A549 (cell line): ENCODE measurements at regions of chr19 and their contacts with region 1.

Region 1: GRCh38 chr19:46487802-46488445 is 7.7 kb downstream of the PNMA8B start:
- DNase-seq: peak; percentile 71 to 86
- ATAC-seq: peak; percentile 75 to 93
- H3K4me3 ChIP-seq: peak overlapping the region; percentile 46
- H3K27ac ChIP-seq: peak overlapping the region; percentile 65 to 72; a peak in 5 of 6 replicates
- H3K4me1 ChIP-seq: peaks cover 10% of the 10 kb centered on the region; the same call in 1 of the 3 replicates
- CTCF ChIP-seq: peak; percentile 98
- EP300 ChIP-seq: no peak
- POLR2A ChIP-seq: no peak
- RAD21 ChIP-seq: peak; percentile 99 to 100

Region 2: DNA sequence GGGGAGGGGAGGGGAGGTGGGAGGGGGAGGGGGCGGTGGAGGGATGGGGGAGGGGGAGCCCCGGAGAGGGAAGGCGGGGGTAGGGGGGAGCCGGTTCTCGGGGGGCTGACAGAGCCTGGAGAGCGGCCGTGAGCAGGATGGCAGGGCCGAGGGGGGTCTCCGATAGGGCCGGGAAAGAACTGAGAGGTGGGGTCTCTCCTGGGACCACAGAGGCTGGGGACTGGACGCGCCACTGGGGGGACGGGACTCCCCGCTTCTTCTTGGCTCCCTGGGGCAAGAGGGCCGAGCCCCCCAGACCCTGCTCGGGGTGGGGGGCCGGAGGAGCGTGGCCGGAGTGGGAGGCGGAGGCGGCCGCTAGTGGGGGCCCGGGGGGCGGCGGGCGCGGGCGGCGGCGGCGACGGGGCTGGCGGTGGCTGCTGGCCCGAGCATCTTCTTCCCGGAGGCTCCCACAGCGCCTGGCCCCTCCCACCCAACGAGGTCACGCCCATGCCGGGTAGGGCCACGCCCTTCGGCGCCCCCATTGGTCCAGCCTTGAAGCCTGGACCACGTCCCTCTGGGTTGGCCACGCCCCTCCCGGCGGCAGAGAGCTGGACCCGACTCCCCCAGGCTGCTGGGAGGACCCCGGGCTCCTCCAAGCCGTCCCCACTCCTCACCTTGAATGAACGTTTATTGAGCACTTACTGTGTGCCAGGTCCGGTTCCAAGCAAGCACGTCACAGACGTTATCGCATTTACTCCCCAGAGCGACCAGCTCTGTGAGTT is 514.2 kb before region 1 on chr19 and contains the start of gene NOVA2:
- CTCF ChIA-PET with region 1: no interaction called
- POLR2A ChIA-PET with region 1: no interaction called
- DNase-seq: peak; percentile 88 to 97
- ATAC-seq: peak; percentile 70 to 92
- H3K4me3 ChIP-seq: peak within 1 kb of the TSS; percentile 55
- H3K27ac ChIP-seq: peak within 1 kb of the TSS; percentile 41 to 71; a peak in 4 of 6 replicates
- H3K4me1 ChIP-seq: peaks cover 17% of the 10 kb centered on the region; the same call in 2 of the 3 replicates
- CTCF ChIP-seq: no peak
- EP300 ChIP-seq: no peak
- POLR2A ChIP-seq: no peak
- RAD21 ChIP-seq: no peak
- polyA plus RNA-seq, gene NOVA2: 0.06 and 0.17 TPM in 2 replicates

Region 3: DNA sequence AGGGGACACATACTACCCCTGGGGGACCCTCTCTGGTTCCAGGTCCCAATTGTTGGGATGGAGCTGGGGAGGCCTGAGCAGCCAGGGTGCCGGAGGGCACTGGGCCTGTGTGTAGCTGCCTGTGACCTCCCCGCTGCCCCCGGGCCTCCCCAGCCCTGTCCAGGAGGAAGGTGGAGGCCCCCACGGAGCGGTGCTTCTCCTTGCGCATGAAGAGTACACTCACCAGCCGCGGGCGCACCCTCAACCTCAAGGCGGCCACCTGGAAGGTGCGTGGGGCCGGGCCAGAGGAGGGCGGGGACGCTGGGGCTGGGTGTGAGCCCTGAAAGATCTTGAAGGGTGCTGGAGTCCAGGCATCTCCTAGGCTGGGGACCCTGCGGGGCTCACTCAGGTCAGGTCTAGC is 179.4 kb before region 1 on chr19:
- CTCF ChIA-PET with region 1: no interaction called
- POLR2A ChIA-PET with region 1: no interaction called
- DNase-seq: no peak
- ATAC-seq: 0 out of 6 replicates have a peak, but pooled peaks of 1 of the 2 experiments have one; percentile 14
- H3K4me3 ChIP-seq: no peak overlapping the region
- H3K27ac ChIP-seq: no peak overlapping the region
- H3K4me1 ChIP-seq: peaks cover 3% of the 10 kb centered on the region
- CTCF ChIP-seq: no peak
- EP300 ChIP-seq: no peak
- POLR2A ChIP-seq: no peak
- RAD21 ChIP-seq: no peak

Region 4: DNA sequence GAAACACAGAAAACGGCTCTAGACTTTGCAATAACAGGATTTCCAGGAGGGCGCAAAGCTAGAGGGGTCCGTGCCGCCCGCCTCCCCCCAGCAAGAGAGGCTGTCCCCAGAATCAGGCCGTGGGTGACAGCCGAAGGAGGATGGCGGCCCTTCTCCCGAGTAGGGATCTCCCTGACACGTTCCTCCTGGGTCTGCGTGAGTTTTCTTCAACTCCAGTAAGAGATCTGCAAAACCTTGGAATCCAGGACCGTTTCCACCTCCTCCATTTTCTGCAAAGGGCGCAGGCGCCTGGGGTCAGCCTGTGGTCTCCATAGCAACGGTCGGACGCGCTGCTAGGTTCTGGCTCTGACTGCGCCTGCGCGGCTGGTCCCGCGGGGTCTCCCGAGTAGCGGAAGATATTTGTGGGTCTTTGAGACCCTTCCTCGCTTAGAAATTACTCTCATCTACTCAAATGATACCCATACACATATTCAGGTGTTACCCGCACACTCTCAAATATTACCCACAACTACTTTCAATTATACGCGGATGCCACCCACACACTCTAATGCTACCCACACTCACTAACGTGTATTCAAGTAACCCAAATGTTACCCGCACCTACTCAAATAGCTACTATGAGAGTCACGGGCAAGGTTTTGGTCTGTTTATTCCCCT is 61.3 kb before region 1 on chr19:
- CTCF ChIA-PET with region 1: interaction called, 15 read pairs
- POLR2A ChIA-PET with region 1: no interaction called
- DNase-seq: peak; percentile 81 to 95
- ATAC-seq: peak; percentile 90
- H3K4me3 ChIP-seq: peak overlapping the region; percentile 55
- H3K27ac ChIP-seq: peak overlapping the region; percentile 68 to 86
- H3K4me1 ChIP-seq: peaks cover 8% of the 10 kb centered on the region
- CTCF ChIP-seq: no peak
- EP300 ChIP-seq: no peak
- POLR2A ChIP-seq: no peak; the same call in 1 of the 2 replicates
- RAD21 ChIP-seq: no peak

Region 5: GRCh38 chr19:46471116-46471733 is 16.7 kb before region 1 on chr19 and contains the start of gene PNMA8A:
- CTCF ChIA-PET with region 1: interaction called, 39 read pairs
- POLR2A ChIA-PET with region 1: no interaction called
- DNase-seq: peak; percentile 57 to 65
- ATAC-seq: peak; percentile 67 to 78
- H3K4me3 ChIP-seq: peak within 1 kb of the TSS; percentile 55
- H3K27ac ChIP-seq: peak within 1 kb of the TSS; percentile 76 to 88
- H3K4me1 ChIP-seq: peaks cover 16% of the 10 kb centered on the region; the same call in 2 of the 3 replicates
- CTCF ChIP-seq: no peak
- EP300 ChIP-seq: no peak
- POLR2A ChIP-seq: peak; percentile 58
- RAD21 ChIP-seq: no peak
- polyA plus RNA-seq, gene PNMA8A: 11.2 and 14.1 TPM in 2 replicates

Region 6: DNA sequence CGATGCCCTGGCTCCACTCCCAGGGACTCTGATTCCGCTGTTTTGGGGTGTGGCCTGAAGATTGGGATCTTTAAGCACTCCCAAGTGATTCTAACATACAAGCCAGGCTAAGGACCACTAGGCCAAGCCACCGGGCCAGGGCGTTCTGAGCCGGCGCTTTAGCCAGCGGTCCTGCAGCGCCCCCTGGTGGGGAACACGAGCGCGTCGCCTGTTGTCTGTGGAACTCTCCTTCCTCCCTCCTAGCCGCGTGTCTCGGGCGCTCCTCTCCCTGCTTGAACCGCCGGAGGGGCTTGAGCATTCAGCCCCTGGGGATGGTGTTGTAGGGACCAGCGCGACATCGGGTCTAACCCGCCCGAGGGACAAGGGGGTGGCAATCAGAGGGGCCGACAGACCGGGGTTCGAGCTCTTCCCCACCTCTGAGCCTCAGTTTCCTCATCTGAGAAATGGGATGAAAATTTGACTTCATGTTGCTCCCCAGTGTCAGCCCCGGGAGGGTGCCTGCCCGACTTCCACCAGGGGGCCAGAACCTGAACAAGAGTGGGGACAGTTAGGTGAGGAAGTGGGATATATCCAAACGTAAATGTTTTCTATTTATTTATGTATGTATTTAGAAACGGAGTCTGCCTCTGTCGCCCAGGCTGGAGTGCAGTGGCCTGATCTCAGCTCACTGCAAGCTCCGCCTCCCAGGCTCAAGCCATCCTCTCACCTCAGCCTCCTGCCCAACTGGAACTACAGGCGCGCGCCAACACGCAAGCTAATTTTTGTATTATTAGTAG is 25.7 kb after region 1 on chr19:
- CTCF ChIA-PET with region 1: interaction called, 28 read pairs
- POLR2A ChIA-PET with region 1: no interaction called
- DNase-seq: peak; percentile 83 to 88
- ATAC-seq: peak; percentile 91 to 94
- H3K4me3 ChIP-seq: no peak overlapping the region
- H3K27ac ChIP-seq: peak overlapping the region in 1 of 2 experiments; percentile 52; a peak in 1 of 6 replicates
- H3K4me1 ChIP-seq: peaks cover 16% of the 10 kb centered on the region; the same call in 2 of the 3 replicates
- CTCF ChIP-seq: peak; percentile 97
- EP300 ChIP-seq: no peak
- POLR2A ChIP-seq: no peak
- RAD21 ChIP-seq: peak; percentile 95 to 97

Region 7: DNA sequence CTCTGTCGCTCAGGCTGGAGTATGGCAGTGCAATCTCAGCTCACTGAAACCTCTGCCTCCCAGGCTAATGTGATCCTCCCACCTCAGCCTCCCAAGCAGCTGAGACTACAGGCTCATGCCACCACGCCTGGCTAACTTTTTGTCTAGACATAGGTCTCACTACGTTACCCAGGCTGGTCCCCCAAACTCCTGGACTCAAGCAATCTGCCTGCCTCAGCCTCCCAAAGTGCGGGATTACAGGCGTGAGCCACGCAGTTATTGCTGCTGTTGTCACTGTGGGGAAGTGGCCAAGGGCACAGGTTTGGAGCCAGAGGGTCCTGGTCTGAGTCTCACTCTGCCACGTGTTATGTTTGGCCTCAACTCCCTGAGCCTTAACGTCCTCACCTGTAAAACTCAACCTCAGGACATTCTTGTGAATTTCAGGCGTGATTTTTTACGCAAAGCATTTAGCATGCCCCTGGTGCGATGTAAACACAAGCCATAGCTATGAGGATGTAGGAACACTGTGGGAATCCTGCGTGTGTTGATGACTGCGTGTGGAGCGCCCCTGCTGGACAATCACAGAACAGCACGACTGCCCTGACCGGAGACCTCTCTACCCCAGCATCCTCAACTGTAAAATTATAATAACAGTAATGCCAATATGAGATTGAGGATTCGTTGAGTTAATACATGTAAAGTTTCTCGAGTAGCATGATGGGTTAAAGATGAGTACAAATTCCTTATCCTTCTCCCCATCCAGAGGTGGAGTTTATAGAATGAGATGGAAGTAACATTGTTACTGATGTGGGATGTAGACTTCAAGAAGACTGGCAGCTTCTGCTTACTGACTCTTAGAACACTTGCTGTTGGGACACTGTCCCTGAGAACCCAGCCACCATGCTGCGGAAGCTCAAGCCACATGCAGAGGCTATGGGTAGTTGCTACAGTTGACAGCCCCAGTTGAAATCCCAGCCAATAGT is 49.5 kb after region 1 on chr19:
- CTCF ChIA-PET with region 1: interaction called, 11 read pairs
- POLR2A ChIA-PET with region 1: no interaction called
- DNase-seq: peak; percentile 55 to 59
- ATAC-seq: peak; percentile 84 to 89
- H3K4me3 ChIP-seq: no peak overlapping the region
- H3K27ac ChIP-seq: no peak overlapping the region
- H3K4me1 ChIP-seq: no peaks in the 10 kb centered on the region
- CTCF ChIP-seq: peak; percentile 77
- EP300 ChIP-seq: no peak
- POLR2A ChIP-seq: no peak
- RAD21 ChIP-seq: 0 out of 5 replicates have a peak, but pooled peaks of 1 of the 2 experiments have one; percentile 12

Region 8: DNA sequence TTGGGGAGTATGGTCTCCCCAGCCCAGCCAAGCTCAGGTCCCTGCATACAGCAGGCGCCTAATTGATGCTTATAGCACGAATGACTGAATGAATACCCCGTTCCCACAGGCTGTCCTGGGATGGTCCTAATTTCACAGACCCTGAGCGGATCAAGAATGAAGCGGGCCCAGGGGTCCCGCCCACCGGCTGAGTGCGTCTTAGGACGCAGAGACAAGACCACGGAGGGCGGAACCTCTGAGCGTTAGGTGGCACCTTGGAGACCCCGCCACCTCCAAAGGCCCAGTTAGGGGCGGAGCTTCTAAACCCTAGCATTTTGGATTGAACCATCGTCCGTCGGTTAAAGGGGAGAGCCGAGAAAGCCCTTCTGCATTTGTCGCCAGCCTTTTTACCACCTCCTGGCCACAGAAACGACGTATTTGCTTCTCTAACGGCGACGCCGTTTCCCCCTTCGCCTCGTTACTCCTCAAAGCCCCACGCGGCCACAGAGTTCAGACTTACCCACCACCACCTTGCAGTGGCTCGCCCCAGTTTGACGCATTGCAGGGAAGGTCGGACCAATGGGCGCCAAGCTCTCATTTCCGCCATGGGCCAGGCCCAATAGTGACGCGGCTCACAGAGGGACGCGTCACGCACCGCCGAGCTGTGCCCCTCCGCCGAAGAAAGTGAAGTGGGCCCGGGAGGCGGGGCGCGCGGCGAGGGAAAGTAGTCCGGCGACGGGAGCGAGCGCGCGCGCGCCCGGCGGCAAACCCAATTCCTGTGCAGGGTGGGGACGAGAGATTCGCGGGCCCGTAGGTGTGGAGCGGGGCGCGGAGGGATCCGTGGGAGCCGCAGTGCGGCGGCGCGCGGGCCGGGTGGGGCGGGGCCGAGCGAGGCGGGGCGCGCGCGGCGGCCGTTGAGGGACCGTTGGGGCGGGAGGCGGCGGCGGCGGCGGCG is 112.7 kb after region 1 on chr19:
- CTCF ChIA-PET with region 1: no interaction called
- POLR2A ChIA-PET with region 1: no interaction called
- DNase-seq: peak; percentile 98 to 100
- ATAC-seq: peak; percentile 85 to 92
- H3K4me3 ChIP-seq: peak overlapping the region; percentile 94
- H3K27ac ChIP-seq: peak overlapping the region; percentile 96 to 97
- H3K4me1 ChIP-seq: peaks cover 23% of the 10 kb centered on the region
- CTCF ChIP-seq: no peak
- EP300 ChIP-seq: no peak
- POLR2A ChIP-seq: peak; percentile 87
- RAD21 ChIP-seq: no peak

Region 9: DNA sequence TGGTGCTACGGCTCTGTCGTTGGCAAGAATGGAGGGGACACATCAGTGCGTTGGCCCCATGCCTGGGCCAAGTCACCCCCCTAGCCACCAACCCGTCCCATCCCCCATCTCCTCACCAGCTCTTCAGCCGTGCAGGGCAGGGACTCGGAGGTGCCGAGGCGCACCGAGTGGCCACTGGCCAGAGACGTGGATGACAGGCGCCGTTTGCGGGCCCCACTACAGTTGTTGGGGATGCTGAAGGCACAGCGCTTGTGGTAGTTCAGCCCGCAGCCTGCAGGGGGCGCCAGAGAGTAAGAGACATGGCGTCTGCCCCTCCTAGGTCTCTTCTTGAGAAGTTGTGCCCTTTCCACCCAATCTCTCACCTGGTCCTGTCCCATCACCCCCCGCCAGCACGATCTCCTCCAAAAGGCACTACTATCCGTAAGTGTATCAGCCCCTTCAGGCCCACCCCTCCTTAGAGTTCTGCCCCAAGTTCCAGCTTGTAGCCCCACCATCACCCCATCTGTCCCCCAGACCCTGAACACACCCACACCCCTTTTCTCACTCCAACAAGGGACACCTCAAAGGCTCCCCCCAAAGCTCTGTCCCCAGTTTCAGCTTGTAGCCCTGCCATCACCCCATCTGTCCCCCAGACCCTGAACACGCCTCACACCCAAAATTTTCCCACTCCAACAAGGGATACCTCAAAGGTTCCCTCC is 216.6 kb after region 1 on chr19:
- CTCF ChIA-PET with region 1: no interaction called
- POLR2A ChIA-PET with region 1: no interaction called
- DNase-seq: peak; percentile 64 to 90
- ATAC-seq: peak; percentile 80 to 90
- H3K4me3 ChIP-seq: no peak overlapping the region
- H3K27ac ChIP-seq: no peak overlapping the region
- H3K4me1 ChIP-seq: no peaks in the 10 kb centered on the region
- CTCF ChIP-seq: peak; percentile 88
- EP300 ChIP-seq: no peak
- POLR2A ChIP-seq: no peak
- RAD21 ChIP-seq: peak; percentile 44 to 62